Endothelial cell of umbilical vein (primary cell): ENCODE measurements at regions of chr1 and their contacts with region 1.

Region 1: GRCh38 chr1:41023279-41023990 is 1.9 kb upstream of the SLFNL1 start:
- DNase-seq: no peak
- H3K4me3 ChIP-seq: no peak overlapping the region
- H3K27ac ChIP-seq: no peak overlapping the region
- H3K4me1 ChIP-seq: peaks cover 27% of the 10 kb centered on the region
- H3K27me3 ChIP-seq: no peaks in the 10 kb centered on the region
- CTCF ChIP-seq: peak; percentile 31 to 59
- POLR2A ChIP-seq: no peak

Region 2: GRCh38 chr1:41003640-41004220 is 19.7 kb before region 1 on chr1:
- CTCF ChIA-PET with region 1: interaction called, 19 read pairs
- POLR2A ChIA-PET with region 1: interaction called, 3 read pairs
- dilution Hi-C with region 1: no loop called
- intact Hi-C with region 1: no loop called
- DNase-seq: peak; percentile 95
- H3K4me3 ChIP-seq: no peak overlapping the region
- H3K27ac ChIP-seq: peak overlapping the region; percentile 44
- H3K4me1 ChIP-seq: peaks cover 10% of the 10 kb centered on the region
- H3K27me3 ChIP-seq: no peaks in the 10 kb centered on the region
- CTCF ChIP-seq: peak; percentile 60 to 67
- POLR2A ChIP-seq: no peak

Region 3: DNA sequence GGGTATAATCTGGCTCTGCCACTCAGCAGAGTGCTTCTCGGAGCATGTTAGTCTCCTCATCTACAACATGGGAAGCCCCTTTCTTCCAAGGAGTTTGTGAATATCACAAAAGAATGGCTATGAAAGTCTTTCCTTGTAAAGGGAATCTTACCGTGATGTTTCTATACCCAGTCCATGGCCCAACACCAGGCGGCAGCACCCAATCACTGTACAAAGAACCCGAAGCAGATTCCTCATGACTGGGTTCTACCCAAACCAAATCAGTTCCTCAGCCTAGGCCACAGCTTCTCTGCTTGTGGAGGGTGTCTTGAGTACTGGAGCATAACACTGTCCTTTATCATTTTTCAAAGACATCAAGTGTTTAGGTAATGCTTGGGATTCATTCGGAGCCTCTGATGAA is 14.7 kb after region 1 on chr1:
- CTCF ChIA-PET with region 1: interaction called, 12 read pairs
- POLR2A ChIA-PET with region 1: no interaction called
- dilution Hi-C with region 1: no loop called
- intact Hi-C with region 1: no loop called
- DNase-seq: no peak
- H3K4me3 ChIP-seq: no peak overlapping the region
- H3K27ac ChIP-seq: no peak overlapping the region
- H3K4me1 ChIP-seq: peaks cover 14% of the 10 kb centered on the region
- H3K27me3 ChIP-seq: no peaks in the 10 kb centered on the region
- CTCF ChIP-seq: no peak
- POLR2A ChIP-seq: no peak

Region 4: GRCh38 chr1:41241354-41241781 is 217.9 kb after region 1 on chr1:
- CTCF ChIA-PET with region 1: interaction called, 17 read pairs
- POLR2A ChIA-PET with region 1: no interaction called
- dilution Hi-C with region 1: no loop called
- intact Hi-C with region 1: loop called (anchors 1 kb)
- DNase-seq: peak; percentile 34
- H3K4me3 ChIP-seq: peak overlapping the region; percentile 48 to 67 (median 66)
- H3K27ac ChIP-seq: peak overlapping the region; percentile 64
- H3K4me1 ChIP-seq: peaks cover 42% of the 10 kb centered on the region
- H3K27me3 ChIP-seq: no peaks in the 10 kb centered on the region
- CTCF ChIP-seq: no peak
- POLR2A ChIP-seq: no peak